ENCODE measurements at regions of chr3 and their contacts with region 1.

Region 1: GRCh38 chr3:141875374-141875892 is 1.0 kb upstream of the ATP1B3 start:
- DNase-seq: peak; percentile 95
- H3K4me3 Mint-ChIP-seq: peak overlapping the region; percentile 98
- H3K27ac Mint-ChIP-seq: peak overlapping the region; percentile 97
- H3K4me1 Mint-ChIP-seq: peaks cover 29% of the 10 kb centered on the region
- H3K27me3 Mint-ChIP-seq: peaks cover 2% of the 10 kb centered on the region

Region 2: DNA sequence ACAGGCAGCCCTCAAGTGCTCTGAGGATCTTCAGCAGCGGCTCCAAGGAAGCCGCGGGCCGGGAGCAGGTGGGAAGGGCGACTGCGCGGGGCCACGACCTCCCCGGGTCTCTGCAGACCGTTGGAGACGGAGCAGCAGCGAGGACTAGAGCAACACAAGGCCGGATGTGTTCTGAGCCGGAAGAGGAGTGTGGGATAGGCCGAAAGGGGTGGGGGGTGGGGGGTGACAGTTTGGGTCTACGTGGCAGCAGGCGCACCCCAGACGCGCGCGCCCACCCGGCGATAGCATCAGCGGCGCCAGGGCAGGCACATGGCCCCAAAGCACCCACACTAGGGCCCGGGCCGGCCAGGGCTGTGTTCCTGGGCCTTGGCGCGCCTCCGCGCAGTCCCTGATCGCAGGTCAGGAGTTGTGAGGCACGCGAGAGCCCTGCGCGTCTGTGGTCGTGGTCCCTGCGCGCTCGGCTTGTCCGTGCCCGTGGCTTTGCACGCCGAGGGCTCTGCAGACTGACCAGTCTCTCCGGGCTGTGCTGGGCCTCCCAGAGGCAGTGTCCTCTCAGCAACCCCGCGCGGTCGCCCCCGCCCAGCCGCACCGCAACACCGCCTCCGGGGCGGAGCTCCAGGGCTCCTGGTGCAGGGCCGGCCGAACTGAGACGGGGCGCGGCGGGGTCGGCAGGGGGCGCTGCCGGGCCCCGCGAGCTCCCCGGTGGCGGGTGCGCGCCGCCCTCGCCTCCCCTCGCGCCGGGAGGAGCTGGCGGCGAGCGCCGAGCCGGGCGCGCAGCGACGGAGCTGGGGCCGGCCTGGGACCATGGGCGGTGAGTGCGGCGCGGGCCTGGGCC is 644.1 kb before region 1 on chr3 and contains the start of gene PXYLP1:
- intact Hi-C with region 1: loop called (anchors 5 kb)
- DNase-seq: peak; percentile 99
- H3K4me3 Mint-ChIP-seq: peak within 1 kb of the TSS; percentile 97
- H3K27ac Mint-ChIP-seq: peak within 1 kb of the TSS; percentile 98
- H3K4me1 Mint-ChIP-seq: peaks cover 49% of the 10 kb centered on the region
- H3K27me3 Mint-ChIP-seq: peaks cover 10% of the 10 kb centered on the region
- total RNA-seq, gene PXYLP1: 10.7 and 11.7 TPM in 2 replicates

Region 3: DNA sequence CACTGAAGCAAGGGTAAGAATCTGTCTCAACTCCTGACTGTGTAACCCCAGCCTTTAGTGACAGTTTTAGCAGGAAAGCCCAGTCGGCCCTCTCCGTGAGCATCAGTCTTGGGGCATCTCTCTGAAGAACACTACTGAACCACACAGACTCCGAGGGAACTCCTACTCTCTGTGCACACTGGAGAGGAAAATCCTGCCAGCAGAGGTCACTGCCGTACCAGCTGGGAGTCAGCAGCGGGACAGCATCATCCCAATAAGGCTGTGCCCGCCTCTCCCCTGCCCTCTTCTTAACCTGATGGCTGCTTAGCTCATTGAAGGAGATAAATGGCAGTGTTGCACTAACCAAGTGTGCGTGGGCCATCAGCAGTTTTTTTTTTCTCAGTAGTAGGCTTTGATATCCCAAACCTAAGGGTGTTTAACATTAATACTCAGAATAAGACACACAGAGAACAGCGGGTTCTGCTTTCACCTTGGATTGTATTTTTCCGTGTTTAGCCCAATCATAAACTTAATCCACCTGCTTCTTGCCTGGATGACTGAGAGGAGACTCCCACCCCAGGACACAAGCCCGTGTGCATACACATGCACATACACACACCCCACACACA is 415.2 kb before region 1 on chr3:
- intact Hi-C with region 1: loop called (anchors 1 kb)
- DNase-seq: peak; percentile 96
- H3K4me3 Mint-ChIP-seq: no peak overlapping the region
- H3K27ac Mint-ChIP-seq: no peak overlapping the region
- H3K4me1 Mint-ChIP-seq: peaks cover 19% of the 10 kb centered on the region
- H3K27me3 Mint-ChIP-seq: peaks cover 1% of the 10 kb centered on the region

Region 4: DNA sequence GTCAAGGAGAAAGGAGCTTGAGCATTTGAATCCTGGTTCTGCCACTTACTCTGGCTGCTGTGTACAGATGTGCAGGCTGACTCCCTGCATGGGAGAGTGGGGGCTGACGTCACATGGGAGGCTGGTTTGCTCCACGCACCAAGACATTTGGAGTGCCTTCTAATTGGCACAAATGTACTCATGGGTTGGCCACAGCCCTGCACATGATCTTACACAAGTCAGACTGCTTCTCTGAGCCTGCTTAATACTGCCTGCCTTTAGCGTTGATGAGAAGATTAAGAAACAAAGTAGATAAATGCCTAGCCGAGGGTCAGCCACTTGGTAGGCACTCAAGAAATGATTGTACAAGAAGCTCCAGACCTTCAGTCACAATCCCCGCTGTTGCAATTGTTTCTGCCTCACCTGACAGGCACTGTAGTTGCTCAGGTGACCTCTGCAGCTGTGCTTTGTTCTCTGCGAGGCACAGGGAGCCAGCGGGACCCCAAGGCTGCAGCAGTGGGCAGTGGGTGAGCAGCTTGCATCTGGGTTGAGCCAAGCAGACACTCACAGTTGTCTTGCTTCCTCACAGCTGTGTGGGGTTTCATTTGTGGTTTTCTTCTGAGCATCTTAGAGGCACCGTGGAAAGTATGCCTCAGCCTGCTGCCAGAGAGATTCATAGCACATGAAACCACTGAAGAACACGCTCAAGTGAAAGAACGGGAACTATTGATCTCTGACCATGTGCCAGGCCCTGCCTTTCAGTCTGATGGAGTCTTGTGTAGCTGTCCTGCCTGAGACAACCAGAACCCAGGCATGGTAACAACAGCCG is 79.1 kb before region 1 on chr3:
- intact Hi-C with region 1: loop called (anchors 1 kb)
- DNase-seq: peak; percentile 92
- H3K4me3 Mint-ChIP-seq: peak overlapping the region; percentile 84
- H3K27ac Mint-ChIP-seq: peak overlapping the region; percentile 100
- H3K4me1 Mint-ChIP-seq: peaks cover 44% of the 10 kb centered on the region
- H3K27me3 Mint-ChIP-seq: no peaks in the 10 kb centered on the region

Region 5: GRCh38 chr3:141840737-141841544 is 34.5 kb before region 1 on chr3:
- intact Hi-C with region 1: no loop called
- DNase-seq: no peak
- H3K4me3 Mint-ChIP-seq: no peak overlapping the region
- H3K27ac Mint-ChIP-seq: peak overlapping the region; percentile 54
- H3K4me1 Mint-ChIP-seq: peaks cover 7% of the 10 kb centered on the region
- H3K27me3 Mint-ChIP-seq: no peaks in the 10 kb centered on the region

Region 6: GRCh38 chr3:141913150-141913811 is 37.8 kb after region 1 on chr3:
- intact Hi-C with region 1: loop called (anchors 1 kb)
- DNase-seq: peak; percentile 86
- H3K4me3 Mint-ChIP-seq: no peak overlapping the region
- H3K27ac Mint-ChIP-seq: peak overlapping the region; percentile 12
- H3K4me1 Mint-ChIP-seq: peaks cover 6% of the 10 kb centered on the region
- H3K27me3 Mint-ChIP-seq: no peaks in the 10 kb centered on the region

Region 7: GRCh38 chr3:142098964-142099363 is 223.5 kb after region 1 on chr3:
- intact Hi-C with region 1: no loop called
- DNase-seq: no peak
- H3K4me3 Mint-ChIP-seq: no peak overlapping the region
- H3K27ac Mint-ChIP-seq: no peak overlapping the region
- H3K4me1 Mint-ChIP-seq: peaks cover 5% of the 10 kb centered on the region
- H3K27me3 Mint-ChIP-seq: no peaks in the 10 kb centered on the region

Region 8: DNA sequence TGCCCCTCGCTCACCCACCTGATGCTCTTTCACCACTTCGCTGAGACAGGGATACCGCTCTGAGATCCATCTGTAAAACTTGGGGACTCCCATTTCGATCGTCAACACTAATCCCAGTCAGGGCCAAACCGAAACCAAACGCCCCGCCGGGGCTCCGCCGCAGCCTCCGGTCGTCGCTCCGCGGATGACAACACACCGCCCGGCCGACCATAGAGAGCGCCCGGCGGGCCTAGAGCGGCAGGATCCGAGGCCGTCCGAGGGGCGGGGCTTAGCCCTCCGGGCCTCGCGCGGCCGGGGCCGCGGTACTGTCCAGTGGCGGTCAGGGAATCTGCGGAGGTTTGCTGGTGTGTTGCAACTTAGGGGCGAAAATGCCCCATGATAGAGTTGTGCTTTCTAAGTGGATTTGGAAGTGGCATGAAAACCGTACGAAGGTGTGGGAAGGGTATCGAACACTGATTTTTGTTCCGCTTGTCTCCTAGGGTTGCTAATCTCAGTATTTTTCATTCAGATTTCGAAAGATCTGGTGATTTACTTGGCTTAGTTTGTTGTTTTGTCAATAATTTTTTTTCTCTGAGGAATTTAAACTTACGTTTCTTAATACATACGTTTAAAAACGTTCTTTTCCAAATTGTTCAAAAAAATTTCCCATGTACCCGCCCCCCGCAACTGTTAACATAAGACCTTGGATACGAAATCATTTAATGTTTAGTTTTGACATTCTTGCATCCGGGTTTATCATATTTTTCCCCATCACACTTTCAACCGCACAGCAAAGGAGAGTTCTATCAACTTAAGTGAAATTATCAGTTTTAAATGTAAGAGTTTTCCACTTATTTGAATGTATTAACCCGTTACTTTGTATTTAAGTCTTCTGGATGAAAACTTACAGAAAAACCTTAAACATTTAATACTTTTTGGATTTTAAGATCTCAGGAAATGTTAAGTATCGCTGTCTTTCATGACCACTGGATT is 572.7 kb after region 1 on chr3 and contains the start of gene XRN1:
- intact Hi-C with region 1: loop called (anchors 5 kb)
- DNase-seq: peak; percentile 99
- H3K4me3 Mint-ChIP-seq: peak within 1 kb of the TSS; percentile 100
- H3K27ac Mint-ChIP-seq: peak within 1 kb of the TSS; percentile 99
- H3K4me1 Mint-ChIP-seq: peaks cover 25% of the 10 kb centered on the region
- H3K27me3 Mint-ChIP-seq: no peaks in the 10 kb centered on the region
- total RNA-seq, gene XRN1: 43.8 and 49.5 TPM in 2 replicates